ENCODE measurements at regions of chr11 and their contacts with region 1.

Region 1: DNA sequence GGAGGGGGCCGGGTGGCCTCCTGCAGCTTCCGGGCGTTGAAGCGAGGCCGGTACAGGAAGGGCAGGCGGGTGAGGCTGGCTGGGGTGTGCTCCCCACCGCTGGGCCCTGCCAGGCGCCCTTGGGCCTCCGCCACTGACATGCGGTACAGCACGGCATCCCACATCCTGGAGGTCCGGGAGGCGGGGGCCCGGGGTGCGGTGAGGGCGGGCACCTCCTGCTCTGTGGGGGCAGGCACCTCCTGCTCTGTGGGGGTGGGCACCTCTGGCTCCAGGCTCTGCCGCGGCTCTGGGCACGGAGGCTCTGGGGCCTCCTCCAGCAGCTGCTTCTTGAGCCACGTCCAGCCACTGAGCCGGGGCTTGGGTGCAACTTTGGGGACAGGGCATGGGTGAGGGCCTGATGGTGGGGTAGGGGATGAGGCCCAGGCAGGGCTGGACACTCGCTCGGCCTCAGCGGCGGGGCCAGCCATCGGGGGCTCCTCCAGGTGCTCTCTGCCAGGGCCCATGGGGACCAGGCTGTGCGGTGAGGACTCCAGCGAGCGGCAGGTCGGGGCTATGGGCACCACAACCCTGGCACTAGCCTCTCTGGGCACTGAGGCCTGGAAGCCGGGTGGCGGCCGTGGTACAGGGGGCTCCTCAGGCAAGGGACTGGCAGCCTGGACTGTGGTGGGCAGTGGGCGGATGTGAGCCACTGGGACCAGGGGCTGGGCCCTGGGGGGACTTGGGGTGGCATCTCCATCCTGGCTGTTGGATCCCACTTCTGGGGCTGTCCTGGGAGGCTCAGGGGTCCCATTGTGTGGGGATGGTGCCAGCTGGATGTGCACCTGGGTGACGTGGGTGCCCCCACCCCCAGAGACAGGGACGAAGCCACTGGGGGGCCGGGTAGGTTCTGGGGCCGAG is 2.2 kb downstream of the PRR33 start:
- DNase-seq: peak; percentile 83 to 85 (median 84)
- H3K4me3 ChIP-seq: peak overlapping the region in 1 of 2 donors; percentile 39
- H3K4me3 Mint-ChIP-seq: peak overlapping the region; percentile 14 to 84 (median 70)
- H3K27ac ChIP-seq: peak overlapping the region; percentile 53
- H3K27ac Mint-ChIP-seq: peak overlapping the region; percentile 17 to 94 (median 88)
- H3K4me1 ChIP-seq: peaks cover 47% of the 10 kb centered on the region
- H3K4me1 Mint-ChIP-seq: peaks cover 23 to 44% (median 32%) of the 10 kb centered on the region in 4 donors
- H3K27me3 ChIP-seq: no peaks in the 10 kb centered on the region
- H3K27me3 Mint-ChIP-seq: no peaks in the 10 kb centered on the region

Region 2: DNA sequence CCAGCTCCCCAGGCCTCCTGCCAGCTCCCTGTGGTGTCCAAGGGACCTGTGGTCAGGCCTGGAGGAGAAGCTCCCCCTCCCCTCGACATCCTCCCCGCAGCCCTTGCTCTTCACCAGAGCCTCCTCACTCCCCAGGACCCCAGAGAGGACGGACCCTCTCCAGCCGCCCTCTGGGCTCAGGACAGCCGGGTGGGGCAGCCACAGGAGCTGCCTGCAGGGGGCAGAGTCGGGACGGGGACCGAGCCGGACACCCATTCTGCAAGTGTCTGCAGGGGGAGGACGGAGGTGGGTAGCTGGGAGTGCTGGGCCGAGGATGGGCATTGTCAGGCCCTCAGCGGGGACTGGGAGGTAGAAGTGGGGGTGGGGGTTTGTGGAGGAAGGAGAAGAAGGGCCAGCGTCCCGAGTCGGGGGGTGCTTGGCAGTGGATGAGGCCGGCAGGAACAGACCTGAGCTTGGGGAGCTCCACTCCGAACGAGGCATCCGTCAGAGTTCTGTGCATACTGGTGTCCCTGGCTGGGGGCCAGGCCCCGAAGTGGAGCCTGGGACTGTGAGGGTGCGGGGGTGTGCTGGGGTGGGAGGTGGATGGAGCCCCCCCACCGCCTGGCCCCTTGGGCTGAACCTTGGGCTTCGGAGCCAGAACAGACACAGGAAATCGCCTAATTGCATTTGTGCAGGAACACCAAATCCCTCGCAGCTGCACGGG is 13.0 kb before region 1 on chr11:
- CTCF ChIA-PET with region 1: no interaction called
- POLR2A ChIA-PET with region 1: interaction called, 11 read pairs
- intact Hi-C with region 1: no loop called
- DNase-seq: peak in 1 of 5 donors; percentile 30
- H3K4me3 ChIP-seq: no peak overlapping the region
- H3K4me3 Mint-ChIP-seq: no peak overlapping the region
- H3K27ac ChIP-seq: no peak overlapping the region
- H3K27ac Mint-ChIP-seq: peak overlapping the region in 1 of 7 donors; percentile 35
- H3K4me1 ChIP-seq: peaks cover 18% of the 10 kb centered on the region
- H3K4me1 Mint-ChIP-seq: peaks cover 9 to 37% (median 25%) of the 10 kb centered on the region in 4 donors
- H3K27me3 ChIP-seq: no peaks in the 10 kb centered on the region
- H3K27me3 Mint-ChIP-seq: no peaks in the 10 kb centered on the region

Region 3: DNA sequence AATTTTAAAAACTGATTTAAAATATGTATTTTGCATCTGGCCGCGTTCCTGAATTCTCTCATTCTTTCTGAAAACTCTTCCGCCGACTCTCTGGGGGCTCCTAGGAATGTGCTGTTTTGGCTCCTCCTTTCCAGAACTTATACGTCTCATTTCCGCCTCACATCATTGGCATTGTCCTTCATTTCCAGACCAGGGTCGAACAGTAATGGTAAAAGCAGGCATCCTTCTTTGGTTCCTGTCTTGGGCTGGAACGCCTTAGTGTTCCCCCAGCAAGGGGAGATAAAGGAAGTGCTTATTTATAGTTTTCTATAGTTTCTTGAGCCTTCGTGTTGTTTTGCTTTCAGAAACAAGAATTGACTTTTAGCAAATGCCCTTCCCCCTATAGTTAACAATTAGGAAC is 19.1 kb after region 1 on chr11:
- CTCF ChIA-PET with region 1: no interaction called
- POLR2A ChIA-PET with region 1: no interaction called
- intact Hi-C with region 1: no loop called
- DNase-seq: no peak
- H3K4me3 ChIP-seq: no peak overlapping the region
- H3K4me3 Mint-ChIP-seq: no peak overlapping the region
- H3K27ac ChIP-seq: no peak overlapping the region
- H3K27ac Mint-ChIP-seq: no peak overlapping the region
- H3K4me1 ChIP-seq: no peaks in the 10 kb centered on the region
- H3K4me1 Mint-ChIP-seq: no peaks in the 10 kb centered on the region
- H3K27me3 ChIP-seq: no peaks in the 10 kb centered on the region
- H3K27me3 Mint-ChIP-seq: peaks cover 3 to 10% of the 10 kb centered on the region in 2 donors

Measured in CD4-positive, alpha-beta memory T cell (primary cell).